ENCODE measurements at regions of chr5 and their contacts with region 1.

Region 1: DNA sequence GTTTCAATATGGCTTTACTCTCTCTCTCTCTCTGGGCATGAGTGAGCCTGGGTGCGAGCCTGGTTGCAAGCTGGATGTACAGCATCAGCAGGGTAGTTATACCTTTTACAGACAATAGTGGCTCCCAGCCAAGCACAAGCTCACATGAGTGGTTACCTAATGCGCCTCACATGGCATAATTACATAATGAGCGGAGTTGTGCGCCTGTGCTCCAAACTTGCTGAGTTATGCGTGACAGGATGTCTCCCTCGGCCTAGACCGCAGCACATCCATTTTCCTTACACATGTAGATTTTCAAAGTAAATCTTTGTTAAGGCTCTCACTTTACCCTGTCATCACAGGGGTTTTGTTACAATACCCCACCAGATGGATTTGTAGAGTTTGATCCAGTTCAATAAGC is 233.5 kb upstream of the WWC1 start:
- DNase-seq: no peak
- ATAC-seq: no peak
- H3K4me3 ChIP-seq: no peak overlapping the region
- H3K27ac ChIP-seq: no peak overlapping the region
- H3K4me1 ChIP-seq: no peaks in the 10 kb centered on the region
- H3K27me3 ChIP-seq: peaks cover 27% of the 10 kb centered on the region
- CTCF ChIP-seq: no peak

Region 2: DNA sequence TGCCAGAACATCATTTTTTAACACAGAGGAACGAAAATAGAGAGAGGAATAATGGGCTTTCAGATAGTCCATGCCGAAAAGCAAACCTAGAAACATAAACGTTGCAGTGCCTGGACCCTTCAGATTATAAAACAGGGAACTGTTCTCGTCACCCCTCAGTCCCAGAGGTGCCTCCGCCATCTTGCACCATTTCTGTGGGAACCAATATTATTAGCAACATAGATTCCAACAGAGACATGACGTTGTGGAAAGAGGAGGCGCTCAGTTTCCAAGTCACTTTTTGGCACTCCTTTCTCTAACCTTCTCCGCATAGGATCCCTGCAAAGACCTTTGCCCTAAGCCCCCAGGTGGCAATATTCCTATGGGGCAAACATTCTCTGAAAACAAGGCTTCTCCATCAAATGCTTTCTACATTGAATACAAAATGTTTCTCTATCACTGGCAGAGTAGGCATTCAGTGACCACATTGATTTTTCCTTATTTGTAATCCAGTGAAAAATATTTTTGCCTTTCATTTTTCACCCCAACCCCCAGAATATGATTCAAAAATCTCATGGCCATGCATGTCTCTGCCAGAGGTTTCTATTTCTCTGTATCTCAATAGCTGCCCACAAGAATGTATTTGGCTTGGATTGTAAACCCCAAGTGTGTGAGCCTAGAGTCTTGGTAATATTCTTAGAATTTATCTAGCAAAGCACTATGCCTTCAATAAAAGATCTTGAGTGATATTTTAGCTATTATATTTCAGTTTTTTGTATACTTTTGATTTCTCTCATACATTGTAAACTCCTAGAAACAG is 267.2 kb before region 1 on chr5:
- CTCF ChIA-PET with region 1: no interaction called
- POLR2A ChIA-PET with region 1: no interaction called
- intact Hi-C with region 1: loop called (anchors 10 kb)
- DNase-seq: no peak
- ATAC-seq: no peak
- H3K4me3 ChIP-seq: no peak overlapping the region
- H3K27ac ChIP-seq: no peak overlapping the region
- H3K4me1 ChIP-seq: no peaks in the 10 kb centered on the region
- H3K27me3 ChIP-seq: peaks cover 21% of the 10 kb centered on the region; the same call in 1 of the 2 replicates
- CTCF ChIP-seq: no peak

Measured in PC-3 (cell line).